ENCODE measurements at regions of chr7 and their contacts with region 1.

Region 1: GRCh38 chr7:156473476-156474240 is 166.9 kb upstream of the RNF32 start:
- DNase-seq: peak in 1 of 2 experiments; percentile 29
- H3K4me3 ChIP-seq: no peak overlapping the region
- H3K27ac ChIP-seq: no peak overlapping the region
- H3K4me1 ChIP-seq: no peaks in the 10 kb centered on the region
- H3K27me3 ChIP-seq: peaks cover 90% of the 10 kb centered on the region
- CTCF ChIP-seq: peak; percentile 88

Region 2: GRCh38 chr7:155804897-155805825 is 668.5 kb before region 1 on chr7:
- CTCF ChIA-PET with region 1: no interaction called
- POLR2A ChIA-PET with region 1: no interaction called
- intact Hi-C with region 1: loop called (anchors 1 kb)
- DNase-seq: peak in 1 of 2 experiments; percentile 78
- H3K4me3 ChIP-seq: peak overlapping the region; percentile 48; the same call in 1 of the 2 replicates
- H3K27ac ChIP-seq: no peak overlapping the region
- H3K4me1 ChIP-seq: no peaks in the 10 kb centered on the region
- H3K27me3 ChIP-seq: peaks cover 19% of the 10 kb centered on the region; the same call in 1 of the 2 replicates
- CTCF ChIP-seq: peak; percentile 87

Region 3: DNA sequence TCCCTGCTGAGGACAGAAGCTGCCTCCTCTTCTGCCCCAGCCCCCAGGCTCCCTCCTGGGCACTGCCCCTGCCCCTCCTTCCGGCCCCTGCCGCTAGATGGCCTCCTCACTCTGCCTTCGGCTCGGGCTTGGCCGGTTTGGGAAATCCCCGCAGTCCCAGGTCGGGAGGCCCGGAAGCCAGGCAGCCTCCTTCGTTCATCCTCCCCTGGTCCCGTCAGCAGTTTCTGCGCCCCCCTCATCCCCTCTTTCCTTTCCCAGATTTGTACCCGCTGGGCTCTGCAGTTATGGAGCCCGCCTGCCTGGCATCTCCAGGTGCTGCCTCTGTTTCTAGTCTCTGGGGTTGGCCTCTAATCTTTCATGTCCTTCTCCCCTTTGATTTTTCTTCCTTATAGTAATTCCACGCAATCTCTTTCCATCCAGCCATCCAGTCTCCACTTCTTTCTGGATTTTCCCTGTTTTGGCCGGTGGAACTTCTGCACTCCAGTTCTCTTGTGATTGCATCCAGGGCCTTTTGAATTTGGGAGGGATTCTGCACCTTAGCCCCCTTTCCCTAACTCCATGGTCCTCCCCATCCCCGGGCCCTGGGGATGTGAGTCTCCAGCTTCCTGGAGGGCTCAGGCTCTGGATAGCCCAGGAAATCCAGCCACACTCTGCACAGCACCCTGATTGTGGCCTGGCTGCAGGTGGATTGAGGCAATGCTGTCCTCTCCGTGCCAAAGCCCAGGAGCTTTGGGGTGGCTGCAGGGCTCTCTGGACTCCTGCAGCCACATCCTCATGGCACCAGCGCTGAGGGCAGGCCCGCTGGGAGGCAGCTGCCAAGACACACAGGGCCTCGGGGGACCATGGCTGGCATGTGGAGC is 658.1 kb before region 1 on chr7:
- CTCF ChIA-PET with region 1: interaction called, 5 read pairs
- POLR2A ChIA-PET with region 1: no interaction called
- intact Hi-C with region 1: loop called (anchors 2 kb)
- DNase-seq: peak; percentile 49 to 80
- H3K4me3 ChIP-seq: peak overlapping the region; percentile 11; the same call in 1 of the 2 replicates
- H3K27ac ChIP-seq: no peak overlapping the region
- H3K4me1 ChIP-seq: peaks cover 39% of the 10 kb centered on the region
- H3K27me3 ChIP-seq: no peaks in the 10 kb centered on the region
- CTCF ChIP-seq: peak; percentile 90

Region 4: DNA sequence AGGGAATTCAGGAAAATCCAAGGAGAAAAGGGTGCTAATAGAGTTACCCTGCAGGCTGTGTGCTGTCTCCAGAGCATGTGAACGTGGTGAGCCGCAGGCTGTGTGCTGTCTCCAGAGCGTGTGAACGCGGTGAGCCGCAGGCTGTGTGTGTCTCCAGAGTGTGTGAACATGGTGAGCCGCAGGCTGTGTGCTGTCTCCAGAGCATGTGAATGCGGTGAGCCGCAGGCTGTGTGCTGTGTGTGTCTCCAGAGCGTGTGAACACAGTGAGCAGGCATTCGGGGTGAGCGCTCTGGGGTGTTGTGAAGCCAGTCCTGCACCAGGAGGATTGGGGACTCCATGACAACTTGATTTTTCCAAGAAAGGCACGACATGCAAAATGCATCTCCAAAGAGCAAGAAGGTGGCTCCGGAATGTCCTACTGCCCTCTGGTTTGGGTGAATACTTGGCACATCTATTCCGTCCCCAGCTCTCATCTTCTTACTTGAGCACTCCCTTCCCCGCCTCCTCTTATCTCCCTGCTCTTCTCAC is 253.5 kb before region 1 on chr7:
- CTCF ChIA-PET with region 1: no interaction called
- POLR2A ChIA-PET with region 1: no interaction called
- intact Hi-C with region 1: loop called (anchors 10 kb)
- DNase-seq: no peak
- H3K4me3 ChIP-seq: no peak overlapping the region
- H3K27ac ChIP-seq: no peak overlapping the region
- H3K4me1 ChIP-seq: no peaks in the 10 kb centered on the region
- H3K27me3 ChIP-seq: peaks cover 98% of the 10 kb centered on the region
- CTCF ChIP-seq: no peak

Region 5: DNA sequence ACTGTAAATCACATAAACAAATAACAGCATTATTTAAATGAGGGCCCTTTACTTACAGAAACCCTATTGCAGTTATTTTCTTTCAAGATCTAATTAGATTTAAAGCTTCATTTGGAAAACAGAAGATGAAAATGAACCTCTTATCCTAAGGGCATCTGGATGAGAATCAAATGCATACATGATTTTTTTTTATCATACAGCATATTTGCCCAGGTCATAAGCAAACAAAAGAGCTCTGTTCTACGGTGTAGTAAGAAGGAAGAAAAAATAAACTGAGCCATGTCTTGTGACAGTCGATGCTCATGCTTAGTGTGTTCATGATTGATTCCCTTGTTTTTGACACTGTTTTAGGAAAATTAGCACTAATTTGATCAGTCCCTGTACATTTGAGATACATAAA is 35.7 kb before region 1 on chr7:
- CTCF ChIA-PET with region 1: no interaction called
- POLR2A ChIA-PET with region 1: no interaction called
- intact Hi-C with region 1: no loop called
- DNase-seq: no peak
- H3K4me3 ChIP-seq: no peak overlapping the region
- H3K27ac ChIP-seq: no peak overlapping the region
- H3K4me1 ChIP-seq: no peaks in the 10 kb centered on the region
- H3K27me3 ChIP-seq: peaks cover 96% of the 10 kb centered on the region
- CTCF ChIP-seq: no peak

Region 6: GRCh38 chr7:156816943-156817572 is 343.4 kb after region 1 on chr7:
- CTCF ChIA-PET with region 1: no interaction called
- POLR2A ChIA-PET with region 1: no interaction called
- intact Hi-C with region 1: loop called (anchors 10 kb)
- DNase-seq: no peak
- H3K4me3 ChIP-seq: no peak overlapping the region
- H3K27ac ChIP-seq: no peak overlapping the region
- H3K4me1 ChIP-seq: no peaks in the 10 kb centered on the region
- H3K27me3 ChIP-seq: no peaks in the 10 kb centered on the region
- CTCF ChIP-seq: peak; percentile 84

Measured in PC-9 (cell line).